Cardiac septum (tissue), 1 donor: ENCODE measurements at regions of chr16 and their contacts with region 1.

Region 1: GRCh38 chr16:14300705-14301168 is 229.6 kb downstream of the MRTFB start:
- DNase-seq: peak; percentile 80

Region 2: GRCh38 chr16:13945744-13946505 is 354.8 kb before region 1 on chr16:
- intact Hi-C with region 1: no loop called
- DNase-seq: no peak

Region 3: GRCh38 chr16:14325502-14326401 is 25.0 kb after region 1 on chr16:
- intact Hi-C with region 1: no loop called
- DNase-seq: no peak

Region 4: GRCh38 chr16:14405611-14406537 is 105.1 kb after region 1 on chr16:
- intact Hi-C with region 1: loop called (anchors 10 kb)
- DNase-seq: no peak

Region 5: DNA sequence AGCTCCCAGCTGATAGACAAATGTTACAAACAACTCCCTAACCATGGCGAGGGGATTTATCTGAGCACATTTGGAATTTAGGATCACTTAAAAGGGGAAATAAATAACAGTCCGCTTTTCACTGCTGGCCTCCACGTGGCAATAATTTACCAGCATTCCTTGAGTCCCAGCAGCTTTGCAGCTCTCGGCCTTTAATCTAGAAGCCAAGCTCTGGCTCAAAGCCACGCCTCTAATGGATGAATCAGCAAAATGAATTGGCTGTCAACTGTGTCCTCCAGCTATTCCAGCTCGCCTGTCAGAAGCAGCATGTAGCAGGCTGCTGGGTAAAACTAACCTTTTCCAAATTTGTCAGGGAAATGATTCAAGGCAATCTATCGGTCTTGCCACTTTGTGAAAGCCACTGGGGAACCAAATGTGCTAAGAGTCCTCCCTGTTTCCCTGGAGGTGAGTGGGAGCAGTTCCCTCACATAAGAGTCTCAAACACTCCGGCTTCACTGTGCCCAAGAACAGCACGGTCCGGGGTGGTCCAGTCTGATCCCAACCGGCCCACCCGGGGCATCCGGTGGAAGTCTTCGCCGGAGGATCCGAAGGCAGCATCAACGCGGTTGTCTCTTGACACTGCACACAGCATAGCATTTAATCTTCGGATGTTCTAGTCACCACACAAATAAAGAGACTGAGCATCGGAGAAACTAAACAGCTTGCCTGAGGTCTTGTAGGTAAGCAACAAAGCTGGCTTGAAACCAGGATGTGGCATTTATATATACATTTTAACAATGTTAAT is 186.0 kb after region 1 on chr16:
- intact Hi-C with region 1: loop called (anchors 5 kb)
- DNase-seq: peak; percentile 86

Region 6: DNA sequence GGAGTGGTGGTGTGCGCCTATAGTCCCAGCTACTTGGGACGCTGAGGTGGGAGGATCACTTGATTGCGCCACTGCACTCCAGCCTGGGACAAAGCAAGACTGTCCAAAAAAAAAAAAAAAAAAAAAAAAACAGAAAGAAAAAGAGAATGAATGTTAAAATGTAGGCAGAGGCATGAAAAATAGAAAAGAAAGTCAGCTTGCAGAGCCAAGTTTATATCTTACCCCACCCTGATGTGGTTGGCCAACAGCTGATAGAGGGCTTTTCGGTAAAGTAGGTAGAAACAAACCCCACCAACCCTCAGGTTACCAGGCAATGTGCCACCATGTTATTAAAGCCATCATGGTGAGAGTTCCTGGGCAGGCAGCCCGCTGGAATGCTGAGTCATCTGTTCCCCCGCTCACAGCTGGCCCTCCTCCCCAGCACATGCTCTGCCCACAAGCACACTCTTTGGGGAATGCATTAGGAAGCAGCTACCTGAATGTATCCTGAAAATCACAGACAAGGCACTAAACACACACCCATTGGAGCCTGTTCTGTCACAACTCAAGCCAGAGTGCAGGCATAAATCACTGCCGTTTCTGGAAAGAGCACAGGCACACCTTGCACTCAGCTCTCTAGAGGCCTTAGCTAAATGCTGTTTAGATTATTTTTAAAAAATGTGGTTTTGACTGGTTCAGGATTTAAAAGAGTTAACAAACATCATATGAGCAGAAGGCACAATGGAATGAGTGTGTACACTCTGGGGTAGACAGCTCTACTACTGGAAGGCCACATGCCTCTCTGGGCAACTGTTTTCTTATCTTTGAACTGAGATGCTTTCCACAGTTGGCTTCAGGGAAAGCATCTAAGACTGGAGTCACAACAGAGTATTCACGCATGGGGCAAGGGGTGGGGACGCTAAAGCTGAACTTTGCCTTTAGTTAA is 200.9 kb after region 1 on chr16:
- intact Hi-C with region 1: loop called (anchors 5 kb)
- DNase-seq: peak; percentile 89

Region 7: GRCh38 chr16:14529010-14529669 is 228.4 kb after region 1 on chr16:
- intact Hi-C with region 1: loop called (anchors 2 kb)
- DNase-seq: no peak